Heart right ventricle (tissue), 16 donors: ENCODE measurements at regions of chr11 and their contacts with region 1.

Region 1: DNA sequence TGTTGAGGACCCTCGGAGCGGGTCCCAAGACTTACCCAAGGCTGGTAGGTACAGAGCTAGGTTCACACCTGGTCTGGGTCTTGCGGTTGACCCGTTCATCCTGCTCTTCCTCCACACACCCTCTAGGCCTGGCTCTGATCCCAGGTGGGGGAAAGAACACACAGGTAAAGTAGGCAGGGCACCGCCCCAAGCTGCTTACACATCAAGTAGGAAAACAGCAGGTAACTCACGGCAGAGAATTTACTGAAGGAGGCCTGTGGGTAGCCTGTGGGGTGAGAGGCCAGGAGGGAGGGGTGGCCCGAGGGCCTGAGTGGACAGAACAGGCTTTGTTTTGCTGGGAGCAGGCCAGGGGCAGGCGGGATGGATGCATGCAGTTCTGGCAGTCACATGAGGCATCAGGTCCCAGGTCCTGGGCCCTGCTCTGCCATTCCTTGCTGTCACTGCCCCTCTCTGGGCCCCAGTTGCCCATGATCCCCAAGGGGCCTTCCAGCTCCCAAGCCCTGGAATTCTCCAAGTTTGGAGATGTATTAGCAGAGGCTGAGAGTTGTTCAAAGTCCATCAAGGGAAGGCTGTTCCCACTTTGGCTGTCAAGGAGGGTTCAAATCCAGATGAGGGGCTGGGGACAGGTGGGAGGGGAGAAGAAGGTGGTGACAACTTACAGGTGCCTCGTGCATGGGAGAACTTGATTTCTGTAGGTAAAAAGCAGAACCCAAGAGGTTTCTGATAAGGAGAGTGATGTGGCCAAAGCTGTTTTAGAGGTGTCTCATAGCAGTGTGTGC is 5.7 kb downstream of the TSKU start:
- DNase-seq: no peak
- ATAC-seq: no peak
- H3K4me3 ChIP-seq: no peak overlapping the region
- H3K27ac ChIP-seq: peak overlapping the region in 4 of 10 donors; percentile 31 to 56 (median 42)
- H3K4me1 ChIP-seq: peaks cover 9 to 73% (median 50%) of the 10 kb centered on the region in 9 donors
- H3K27me3 ChIP-seq: peaks cover 0 to 25% (median 0%) of the 10 kb centered on the region in 7 donors
- CTCF ChIP-seq: no peak

Region 2: GRCh38 chr11:76744186-76745043 is 44.4 kb before region 1 on chr11:
- intact Hi-C with region 1: loop called in 1 of 10 experiments (anchors 5 kb)
- DNase-seq: no peak
- ATAC-seq: peak in 6 of 8 donors; percentile 14 to 65 (median 46)
- H3K4me3 ChIP-seq: no peak overlapping the region
- H3K27ac ChIP-seq: peak overlapping the region in 2 of 10 donors; percentile 0 to 28
- H3K4me1 ChIP-seq: peaks cover 0 to 27% (median 12%) of the 10 kb centered on the region in 9 donors
- H3K27me3 ChIP-seq: no peaks in the 10 kb centered on the region
- CTCF ChIP-seq: no peak

Region 3: GRCh38 chr11:76752321-76753185 is 36.3 kb before region 1 on chr11:
- intact Hi-C with region 1: loop called in 2 of 10 experiments (anchors 5 kb)
- DNase-seq: peak; percentile 83 to 87
- ATAC-seq: peak; percentile 83 to 95 (median 92)
- H3K4me3 ChIP-seq: peak overlapping the region in 3 of 10 donors; percentile 6 to 15 (median 11)
- H3K27ac ChIP-seq: peak overlapping the region in 7 of 10 donors; percentile 10 to 71 (median 62)
- H3K4me1 ChIP-seq: peaks cover 0 to 41% (median 18%) of the 10 kb centered on the region in 9 donors
- H3K27me3 ChIP-seq: no peaks in the 10 kb centered on the region
- CTCF ChIP-seq: no peak

Region 4: DNA sequence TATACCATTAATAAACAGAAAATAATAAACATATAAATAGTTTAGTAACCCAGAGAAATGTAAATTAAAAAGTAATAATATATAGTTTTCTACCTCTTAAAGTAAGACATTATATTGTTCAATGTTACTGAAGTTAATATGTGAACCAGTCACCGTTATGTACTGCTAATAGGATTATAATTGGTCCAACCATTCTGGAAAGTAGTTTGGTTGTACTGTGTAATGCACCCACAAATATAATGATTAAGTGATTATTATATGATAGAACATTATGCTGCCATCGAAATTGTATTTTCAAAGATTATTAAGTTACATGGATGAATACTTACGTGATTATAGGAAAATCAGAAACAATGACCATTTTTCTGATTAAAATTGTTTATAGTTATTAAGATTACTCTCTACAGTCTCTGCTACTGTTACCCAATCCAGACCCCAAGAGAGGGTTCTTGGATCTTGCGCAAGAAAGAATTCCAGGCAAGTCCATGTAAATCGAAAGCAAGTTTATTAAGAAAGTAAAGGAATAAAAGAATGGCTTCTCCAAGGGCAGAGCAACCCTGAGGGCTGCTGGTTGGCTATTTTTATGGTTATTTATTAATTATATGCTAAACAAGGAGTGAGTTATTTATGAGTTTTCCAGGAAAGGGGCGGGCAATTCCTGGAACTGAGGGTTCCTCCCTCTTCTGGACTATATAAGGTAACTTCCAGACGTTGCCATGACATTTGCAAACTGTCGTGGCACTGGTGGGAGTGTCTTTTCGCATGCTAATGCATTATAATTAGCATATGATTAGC is 122.0 kb after region 1 on chr11:
- intact Hi-C with region 1: no loop called
- DNase-seq: peak; percentile 10 to 66
- ATAC-seq: peak; percentile 55 to 88 (median 70)
- H3K4me3 ChIP-seq: peak overlapping the region in 5 of 10 donors; percentile 14 to 34 (median 26)
- H3K27ac ChIP-seq: peak overlapping the region in 8 of 10 donors; percentile 13 to 55 (median 31)
- H3K4me1 ChIP-seq: peaks cover 0 to 17% (median 0%) of the 10 kb centered on the region in 9 donors
- H3K27me3 ChIP-seq: no peaks in the 10 kb centered on the region
- CTCF ChIP-seq: no peak